Esophagus muscularis mucosa (tissue), 4 donors: ENCODE measurements at regions of chr17 and their contacts with region 1.

Region 1: DNA sequence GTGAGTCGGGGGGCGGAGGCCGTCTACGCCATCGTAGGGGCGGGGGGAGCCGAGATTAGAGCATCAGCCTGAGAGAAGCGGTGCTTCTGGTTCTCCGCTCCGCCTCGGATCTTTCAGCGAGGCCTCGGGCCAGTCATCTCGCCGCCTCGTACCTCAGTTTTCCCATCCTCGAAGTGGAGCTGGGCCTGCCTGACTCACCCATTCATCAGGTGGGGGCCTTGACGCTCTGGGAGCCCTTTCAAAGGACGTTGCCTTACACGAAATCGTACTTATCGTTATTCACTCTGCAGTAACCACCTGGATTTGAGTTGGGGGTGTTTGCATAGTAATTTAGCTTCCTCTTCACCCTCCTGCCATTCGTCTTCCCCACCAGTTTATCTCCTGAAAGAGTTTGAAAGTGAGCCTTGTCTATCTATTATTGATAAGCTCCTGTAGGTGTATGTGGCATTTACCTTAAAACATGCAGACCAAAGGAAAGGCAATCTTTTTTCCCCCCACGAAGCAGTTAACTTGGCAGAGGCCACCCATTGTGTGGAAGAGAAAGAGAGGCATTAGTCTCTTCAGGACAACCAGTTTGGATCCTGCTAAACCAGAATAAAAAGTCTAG is 674 bp downstream of the TAF15 start:
- DNase-seq: no peak
- H3K4me3 ChIP-seq: peak overlapping the region; percentile 89 to 93 (median 91)
- H3K27ac ChIP-seq: peak overlapping the region; percentile 92 to 96 (median 95)
- H3K4me1 ChIP-seq: peaks cover 30 to 63% (median 62%) of the 10 kb centered on the region in 4 donors
- H3K27me3 ChIP-seq: no peaks in the 10 kb centered on the region
- CTCF ChIP-seq: no peak
- EP300 ChIP-seq: no peak
- POLR2A ChIP-seq: no peak

Region 2: DNA sequence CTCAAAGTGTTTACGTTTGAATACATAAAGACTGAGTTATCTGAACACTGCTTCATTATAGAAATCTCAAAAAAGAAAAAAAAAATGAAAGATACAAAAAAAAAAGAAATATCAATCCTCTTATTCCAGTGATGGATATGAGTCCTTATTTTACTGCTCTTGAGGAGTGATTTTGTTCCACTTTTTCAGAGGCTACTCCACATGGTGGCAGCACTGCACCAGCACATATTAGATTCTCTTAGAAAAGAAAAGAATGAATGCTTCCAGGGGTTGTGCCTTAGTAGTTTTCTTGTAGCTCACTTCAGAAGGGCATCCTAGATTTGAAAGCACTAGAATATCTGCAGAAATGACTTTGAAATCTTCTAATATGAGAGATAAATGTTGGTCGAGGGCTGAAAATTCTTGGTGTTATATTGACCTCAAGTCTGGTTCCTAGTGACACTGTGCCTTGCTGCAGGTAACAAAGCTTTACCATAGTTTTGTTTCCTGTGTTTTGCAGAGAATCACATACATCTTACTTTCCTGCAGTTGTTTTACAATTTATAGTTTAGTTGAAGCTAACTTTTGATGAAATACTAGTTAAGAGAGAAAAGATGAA is 196.9 kb before region 1 on chr17:
- intact Hi-C with region 1: loop called (anchors 10 kb)
- DNase-seq: no peak
- H3K4me3 ChIP-seq: no peak overlapping the region
- H3K27ac ChIP-seq: no peak overlapping the region
- H3K4me1 ChIP-seq: peaks cover 9 to 71% (median 53%) of the 10 kb centered on the region in 4 donors
- H3K27me3 ChIP-seq: no peaks in the 10 kb centered on the region
- CTCF ChIP-seq: peak; percentile 36 to 58 (median 44)
- EP300 ChIP-seq: no peak
- POLR2A ChIP-seq: no peak